Psoas muscle (tissue), 8 donors: ENCODE measurements at regions of chr2 and their contacts with region 1.

Region 1: DNA sequence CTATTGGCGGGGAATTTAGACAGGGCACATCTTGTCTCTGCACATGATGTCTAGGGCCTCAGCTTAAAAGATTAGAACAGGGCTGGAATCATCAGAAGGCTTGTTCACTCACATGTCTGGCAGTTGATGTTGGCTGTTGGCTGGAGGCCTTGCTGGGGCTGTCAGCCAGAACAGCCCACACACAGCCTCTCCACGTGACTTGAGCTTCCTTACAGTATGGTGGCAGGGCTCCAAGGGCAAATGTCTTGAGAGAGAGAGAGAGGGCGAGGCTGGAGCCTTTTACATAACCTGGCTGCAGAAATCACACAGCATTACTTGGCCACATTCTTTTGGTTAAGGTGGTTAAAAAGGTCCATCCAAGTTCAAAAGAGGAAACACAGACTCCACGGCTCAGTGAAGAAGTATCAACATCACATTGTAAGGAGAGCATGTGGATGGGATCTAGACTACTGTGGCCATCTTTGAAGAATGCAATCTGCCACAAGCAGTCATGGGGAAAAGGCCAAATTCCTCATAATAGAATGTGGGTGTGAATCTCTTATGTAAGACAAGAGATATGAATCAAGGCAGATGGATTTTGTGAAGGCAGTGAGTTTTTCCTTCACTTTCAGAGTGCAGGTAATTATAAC is 30.4 kb downstream of the SRSF7 start:
- DNase-seq: peak; percentile 70 to 89
- ATAC-seq: peak; percentile 73 to 83 (median 81)
- H3K4me3 ChIP-seq: no peak overlapping the region
- H3K27ac ChIP-seq: peak overlapping the region; percentile 82
- H3K4me1 ChIP-seq: peaks cover 23% of the 10 kb centered on the region
- H3K27me3 ChIP-seq: no peaks in the 10 kb centered on the region
- CTCF ChIP-seq: no peak

Region 2: GRCh38 chr2:38581193-38582147 is 139.3 kb before region 1 on chr2:
- intact Hi-C with region 1: loop called in 1 of 2 experiments (anchors 5 kb)
- DNase-seq: no peak
- ATAC-seq: peak; percentile 71 to 93 (median 83)
- H3K4me3 ChIP-seq: no peak overlapping the region
- H3K27ac ChIP-seq: no peak overlapping the region
- H3K4me1 ChIP-seq: peaks cover 12% of the 10 kb centered on the region
- H3K27me3 ChIP-seq: no peaks in the 10 kb centered on the region
- CTCF ChIP-seq: peak; percentile 74

Region 3: GRCh38 chr2:38665854-38666555 is 54.7 kb before region 1 on chr2 and contains the start of gene GALM:
- intact Hi-C with region 1: loop called in 1 of 2 experiments (anchors 10 kb)
- DNase-seq: peak; percentile 76 to 89
- ATAC-seq: peak; percentile 95 to 97 (median 95)
- H3K4me3 ChIP-seq: peak within 1 kb of the TSS; percentile 73
- H3K27ac ChIP-seq: peak within 1 kb of the TSS; percentile 71
- H3K4me1 ChIP-seq: peaks cover 18% of the 10 kb centered on the region
- H3K27me3 ChIP-seq: no peaks in the 10 kb centered on the region
- CTCF ChIP-seq: no peak
- total RNA-seq, gene GALM: 3.6 to 16.1 (median 4.8) TPM

Region 4: GRCh38 chr2:38815614-38816479 is 95.1 kb after region 1 on chr2:
- intact Hi-C with region 1: no loop called
- DNase-seq: no peak
- ATAC-seq: no peak
- H3K4me3 ChIP-seq: no peak overlapping the region
- H3K27ac ChIP-seq: no peak overlapping the region
- H3K4me1 ChIP-seq: no peaks in the 10 kb centered on the region
- H3K27me3 ChIP-seq: no peaks in the 10 kb centered on the region
- CTCF ChIP-seq: no peak